ENCODE measurements at regions of chr17 and their contacts with region 1.

Region 1: DNA sequence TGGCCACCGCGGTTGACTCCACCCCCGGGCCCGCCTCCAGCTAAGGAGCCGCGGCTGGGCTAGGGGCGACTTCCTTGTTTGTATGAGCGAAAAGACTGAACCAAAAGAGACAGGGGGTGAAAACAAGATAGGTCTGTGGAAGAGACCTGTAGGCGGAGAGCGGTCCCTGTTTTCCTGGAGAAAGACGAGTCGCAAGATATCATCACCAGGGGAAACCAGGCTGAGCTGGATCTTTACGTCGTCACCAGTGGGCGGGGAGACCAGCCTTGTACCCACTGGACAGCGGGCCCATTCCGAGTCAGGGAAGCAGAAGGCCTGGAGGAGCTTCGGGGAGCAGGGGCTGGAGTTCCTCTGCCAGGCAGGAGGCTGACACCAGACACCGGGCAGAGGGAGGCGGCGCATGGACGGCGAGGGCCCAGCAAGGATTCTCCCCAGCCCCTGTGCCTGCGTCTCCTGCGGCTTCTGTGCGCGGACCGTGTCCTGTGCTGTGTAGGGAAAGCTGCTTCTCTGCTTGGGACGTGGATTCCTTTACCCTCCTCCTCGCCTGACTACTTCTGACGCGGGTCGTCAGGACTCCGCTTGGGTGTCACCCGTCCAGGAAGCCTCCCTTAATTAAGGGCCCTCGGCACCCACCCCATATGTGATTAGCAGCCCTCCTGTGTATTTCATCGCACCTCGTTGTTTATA is 10.3 kb upstream of the ARL4D start:
- DNase-seq: peak; percentile 96
- ATAC-seq: peak; percentile 93

Region 2: DNA sequence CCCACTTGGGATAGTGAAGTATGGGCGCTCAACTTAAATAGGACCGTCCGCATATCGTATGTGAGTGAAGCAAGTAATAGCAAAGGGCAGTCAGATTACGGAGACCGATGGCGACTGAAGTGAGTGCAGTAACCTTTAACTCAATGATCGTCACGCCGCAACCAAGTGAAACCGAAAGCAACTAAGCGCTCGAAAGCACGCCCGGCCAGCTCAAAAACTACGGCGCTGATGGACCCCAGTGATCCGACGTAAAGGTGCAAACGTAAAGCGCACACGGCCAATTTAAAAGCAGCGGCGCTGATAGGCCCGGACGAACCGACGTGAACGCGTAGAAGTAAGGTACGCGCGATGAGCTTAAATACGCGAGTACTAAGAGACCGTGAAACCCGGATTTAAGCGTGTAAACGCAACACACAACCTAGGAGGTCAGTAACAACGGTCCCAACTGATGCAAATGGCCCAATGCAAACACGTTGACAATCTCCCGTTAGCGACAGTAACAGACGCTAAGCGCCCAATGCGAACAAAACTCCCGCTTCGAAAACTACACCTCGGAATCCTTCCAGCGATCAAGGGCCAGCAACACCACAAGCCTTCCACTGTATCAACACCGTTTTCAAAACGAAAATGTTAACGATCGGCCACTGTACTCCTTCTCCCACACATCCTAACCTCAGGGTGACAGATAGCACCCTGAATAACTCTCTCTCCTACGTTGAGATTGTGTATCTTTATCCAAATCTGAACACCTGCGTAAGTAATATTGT is 27.6 kb before region 1 on chr17:
- intact Hi-C with region 1: loop called (anchors 1 kb)
- DNase-seq: peak; percentile 94
- ATAC-seq: peak; percentile 90

Region 3: GRCh38 chr17:43372273-43372911 is 16.1 kb before region 1 on chr17:
- intact Hi-C with region 1: loop called (anchors 1 kb)
- DNase-seq: no peak
- ATAC-seq: no peak